Right cardiac atrium (tissue), 5 donors: ENCODE measurements at regions of chrX and their contacts with region 1.

Region 1: DNA sequence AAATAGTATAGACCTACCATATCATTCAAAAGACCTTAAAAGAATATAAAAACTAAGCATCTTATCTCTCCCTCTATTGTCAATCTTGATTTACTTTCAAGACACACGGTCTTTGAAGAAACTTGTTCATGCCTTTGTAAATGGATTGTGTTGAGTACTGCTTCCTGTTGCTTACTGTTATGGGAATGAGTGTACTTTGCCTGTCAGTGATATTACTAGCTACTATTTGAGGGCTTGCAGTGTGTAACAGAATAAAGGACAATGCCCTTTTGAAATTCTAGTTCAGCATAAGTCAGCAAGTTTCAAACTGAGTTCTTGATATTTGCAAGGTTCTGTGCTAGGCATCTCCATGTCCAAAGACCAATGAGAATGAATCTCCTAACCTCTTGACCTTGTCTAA is 36.0 kb downstream of the CDKL5 start:
- DNase-seq: no peak
- ATAC-seq: no peak
- H3K4me3 ChIP-seq: no peak overlapping the region
- H3K27ac ChIP-seq: no peak overlapping the region
- H3K4me1 ChIP-seq: peaks cover 2% of the 10 kb centered on the region
- H3K27me3 ChIP-seq: no peaks in the 10 kb centered on the region

Region 2: GRCh38 chrX:18441780-18442367 is 19.6 kb before region 1 on chrX:
- intact Hi-C with region 1: loop called in 1 of 4 experiments (anchors 2 kb)
- DNase-seq: no peak
- ATAC-seq: no peak
- H3K4me3 ChIP-seq: no peak overlapping the region
- H3K27ac ChIP-seq: no peak overlapping the region
- H3K4me1 ChIP-seq: peaks cover 2% of the 10 kb centered on the region
- H3K27me3 ChIP-seq: no peaks in the 10 kb centered on the region